ENCODE measurements at regions of chr3 and their contacts with region 1.

Region 1: DNA sequence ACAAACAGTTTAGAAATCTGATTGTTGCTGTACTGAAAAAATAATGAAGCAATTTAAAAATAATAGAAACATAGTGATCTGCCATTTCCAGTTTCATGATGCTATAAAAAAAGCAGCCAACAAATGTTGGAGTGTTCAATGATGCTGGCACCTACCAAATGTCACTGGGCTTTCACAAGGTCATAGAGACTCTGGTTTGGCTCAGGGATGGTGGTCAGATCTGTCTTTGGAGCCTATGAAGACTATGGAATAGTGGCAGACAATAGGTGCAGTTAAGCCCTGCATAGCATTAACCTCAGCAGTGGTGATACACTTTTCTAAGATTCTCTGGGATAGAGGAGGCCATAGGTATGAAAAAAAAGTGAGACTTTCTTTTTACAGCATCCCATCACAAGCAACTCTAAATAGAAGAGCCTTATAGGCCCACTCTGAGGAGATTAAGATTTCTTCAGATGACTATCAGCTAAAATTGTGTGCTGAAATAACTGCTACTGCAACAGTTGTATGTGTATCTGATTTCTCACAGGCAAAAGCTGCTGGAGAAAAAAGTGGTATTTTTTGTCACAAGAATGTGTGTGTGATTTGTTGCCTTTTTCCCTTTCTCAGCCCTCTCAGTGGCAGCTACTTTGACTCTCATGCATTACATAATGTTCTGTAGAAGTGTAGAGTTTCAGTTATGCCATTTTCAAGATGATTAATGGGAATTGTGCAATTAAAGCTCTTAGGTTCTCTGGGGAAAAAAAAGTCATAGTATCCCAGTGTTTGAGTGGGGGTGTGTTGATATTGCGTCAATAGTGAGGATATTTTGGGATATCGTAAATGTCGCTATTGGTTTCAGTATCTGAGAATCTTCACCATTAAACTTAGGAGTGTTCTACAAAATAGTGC is 137.4 kb downstream of the MBNL1 start:
- DNase-seq: no peak
- H3K4me3 ChIP-seq: peak overlapping the region; percentile 34 to 37
- H3K27ac ChIP-seq: peak overlapping the region; percentile 86 to 87
- H3K4me1 ChIP-seq: peaks cover 3 to 92% (median 51%) of the 10 kb centered on the region in 4 donors
- H3K27me3 ChIP-seq: no peaks in the 10 kb centered on the region
- CTCF ChIP-seq: peak in 1 of 2 experiments; percentile 16

Region 2: GRCh38 chr3:151933234-151933853 is 472.8 kb before region 1 on chr3:
- intact Hi-C with region 1: no loop called
- DNase-seq: no peak
- H3K4me3 ChIP-seq: no peak overlapping the region
- H3K27ac ChIP-seq: no peak overlapping the region
- H3K4me1 ChIP-seq: no peaks in the 10 kb centered on the region
- H3K27me3 ChIP-seq: no peaks in the 10 kb centered on the region
- CTCF ChIP-seq: no peak

Region 3: DNA sequence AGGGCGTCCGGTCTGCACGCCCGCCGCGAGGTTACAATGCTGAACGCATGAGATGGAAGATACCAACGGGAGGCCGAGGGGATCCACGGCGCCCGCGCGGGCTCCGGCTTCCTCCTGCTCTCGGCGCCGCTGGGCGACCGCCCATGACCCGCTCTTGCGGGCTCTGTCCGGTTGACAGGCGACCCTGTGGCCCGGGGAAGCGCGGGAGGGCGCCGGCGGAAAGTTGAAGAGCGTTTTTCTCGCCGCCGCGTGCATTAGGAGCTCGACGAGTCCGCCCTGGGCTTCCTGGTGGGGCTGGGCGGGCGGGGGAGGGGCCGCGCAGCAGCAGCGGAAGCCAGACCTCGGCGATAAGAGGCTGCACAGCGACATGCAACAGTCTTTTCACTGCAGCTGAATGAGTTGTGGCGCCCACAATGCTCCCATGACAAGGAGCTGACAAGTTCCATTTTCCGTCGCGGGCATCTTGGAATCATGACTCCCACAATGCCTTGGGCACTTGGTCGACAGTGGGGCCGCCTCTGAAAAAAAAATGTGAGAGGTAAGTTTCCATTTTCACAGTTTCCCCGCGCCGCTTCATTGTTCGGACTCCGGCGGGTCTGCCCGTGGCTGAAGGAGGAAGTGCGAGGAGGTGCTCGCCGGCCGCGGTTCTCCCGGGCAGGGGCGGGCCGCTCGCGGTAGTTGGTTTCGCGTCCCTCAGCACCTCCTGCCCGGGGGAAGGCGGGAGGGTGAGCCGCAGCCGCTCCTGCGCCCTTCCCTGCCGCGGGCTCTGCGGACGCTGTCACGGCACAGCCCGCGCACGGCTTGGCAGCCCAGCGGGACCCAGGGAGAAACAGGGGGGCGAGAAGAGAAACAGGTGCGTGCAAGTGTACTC is 137.4 kb before region 1 on chr3 and contains the start of gene MBNL1:
- intact Hi-C with region 1: loop called (anchors 10 kb)
- DNase-seq: peak; percentile 81 to 88
- H3K4me3 ChIP-seq: peak within 1 kb of the TSS; percentile 71 to 80
- H3K27ac ChIP-seq: peak within 1 kb of the TSS; percentile 93 to 99
- H3K4me1 ChIP-seq: peaks cover 0 to 49% (median 18%) of the 10 kb centered on the region in 4 donors
- H3K27me3 ChIP-seq: no peaks in the 10 kb centered on the region
- CTCF ChIP-seq: no peak